ENCODE measurements at regions of chr4 and their contacts with region 1.

Region 1: GRCh38 chr4:9762823-9763475 is 18.5 kb upstream of the DRD5 start:
- DNase-seq: peak; percentile 73
- CTCF ChIP-seq: peak; percentile 83

Region 2: DNA sequence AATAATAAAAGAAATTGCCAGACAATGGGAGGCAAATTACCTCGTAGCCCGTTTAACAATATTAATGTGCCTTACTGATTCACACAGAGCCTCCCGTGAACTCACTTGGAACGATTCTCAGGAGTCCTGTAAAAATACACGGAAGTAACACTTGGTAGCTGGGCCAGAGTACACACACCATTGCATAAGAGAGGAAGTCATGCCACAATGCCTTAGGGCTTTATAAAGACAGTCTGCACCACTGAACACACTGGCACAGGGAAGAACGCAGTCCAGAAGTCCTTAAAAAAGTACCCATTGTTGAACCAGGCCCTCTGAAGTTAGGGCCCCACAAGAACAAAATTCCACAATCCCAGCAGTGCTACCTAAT is 243.3 kb after region 1 on chr4:
- CTCF ChIA-PET with region 1: interaction called, 12 read pairs
- POLR2A ChIA-PET with region 1: no interaction called
- DNase-seq: no peak
- CTCF ChIP-seq: no peak